Heart right ventricle (tissue), 16 donors: ENCODE measurements at regions of chr9 and their contacts with region 1.

Region 1: GRCh38 chr9:109574068-109574882 is 76.2 kb upstream of the PTPN3 start:
- DNase-seq: peak in 1 of 2 donors; percentile 48
- ATAC-seq: peak; percentile 46 to 81 (median 72)
- H3K4me3 ChIP-seq: no peak overlapping the region
- H3K27ac ChIP-seq: no peak overlapping the region
- H3K4me1 ChIP-seq: peaks cover 0 to 5% (median 0%) of the 10 kb centered on the region in 9 donors
- H3K27me3 ChIP-seq: no peaks in the 10 kb centered on the region
- CTCF ChIP-seq: peak; percentile 39 to 82 (median 73)

Region 2: GRCh38 chr9:109507421-109507838 is 66.8 kb before region 1 on chr9:
- intact Hi-C with region 1: no loop called
- DNase-seq: no peak
- ATAC-seq: peak in 7 of 8 donors; percentile 9 to 63 (median 42)
- H3K4me3 ChIP-seq: no peak overlapping the region
- H3K27ac ChIP-seq: no peak overlapping the region
- H3K4me1 ChIP-seq: no peaks in the 10 kb centered on the region
- H3K27me3 ChIP-seq: peaks cover 0 to 7% (median 0%) of the 10 kb centered on the region in 7 donors
- CTCF ChIP-seq: no peak

Region 3: GRCh38 chr9:109632817-109633216 is 58.5 kb after region 1 on chr9:
- intact Hi-C with region 1: no loop called
- DNase-seq: no peak
- ATAC-seq: no peak
- H3K4me3 ChIP-seq: no peak overlapping the region
- H3K27ac ChIP-seq: no peak overlapping the region
- H3K4me1 ChIP-seq: no peaks in the 10 kb centered on the region
- H3K27me3 ChIP-seq: peaks cover 0 to 9% (median 2%) of the 10 kb centered on the region in 7 donors
- CTCF ChIP-seq: no peak

Region 4: GRCh38 chr9:109779711-109780452 is 205.6 kb after region 1 on chr9 and contains the start of gene PALM2AKAP2:
- intact Hi-C with region 1: loop called in 1 of 10 experiments (anchors 1 kb)
- DNase-seq: peak; percentile 70 to 81
- ATAC-seq: peak; percentile 85 to 96 (median 90)
- H3K4me3 ChIP-seq: peak within 1 kb of the TSS; percentile 63 to 86 (median 76)
- H3K27ac ChIP-seq: peak within 1 kb of the TSS; percentile 63 to 93 (median 86)
- H3K4me1 ChIP-seq: peaks cover 0 to 26% (median 4%) of the 10 kb centered on the region in 9 donors
- H3K27me3 ChIP-seq: peaks cover 0 to 32% (median 0%) of the 10 kb centered on the region in 7 donors
- CTCF ChIP-seq: peak in 6 of 9 donors; percentile 26 to 60 (median 44)
- total RNA-seq, gene PALM2AKAP2: 66.3 to 111 (median 98.8) TPM

Region 5: DNA sequence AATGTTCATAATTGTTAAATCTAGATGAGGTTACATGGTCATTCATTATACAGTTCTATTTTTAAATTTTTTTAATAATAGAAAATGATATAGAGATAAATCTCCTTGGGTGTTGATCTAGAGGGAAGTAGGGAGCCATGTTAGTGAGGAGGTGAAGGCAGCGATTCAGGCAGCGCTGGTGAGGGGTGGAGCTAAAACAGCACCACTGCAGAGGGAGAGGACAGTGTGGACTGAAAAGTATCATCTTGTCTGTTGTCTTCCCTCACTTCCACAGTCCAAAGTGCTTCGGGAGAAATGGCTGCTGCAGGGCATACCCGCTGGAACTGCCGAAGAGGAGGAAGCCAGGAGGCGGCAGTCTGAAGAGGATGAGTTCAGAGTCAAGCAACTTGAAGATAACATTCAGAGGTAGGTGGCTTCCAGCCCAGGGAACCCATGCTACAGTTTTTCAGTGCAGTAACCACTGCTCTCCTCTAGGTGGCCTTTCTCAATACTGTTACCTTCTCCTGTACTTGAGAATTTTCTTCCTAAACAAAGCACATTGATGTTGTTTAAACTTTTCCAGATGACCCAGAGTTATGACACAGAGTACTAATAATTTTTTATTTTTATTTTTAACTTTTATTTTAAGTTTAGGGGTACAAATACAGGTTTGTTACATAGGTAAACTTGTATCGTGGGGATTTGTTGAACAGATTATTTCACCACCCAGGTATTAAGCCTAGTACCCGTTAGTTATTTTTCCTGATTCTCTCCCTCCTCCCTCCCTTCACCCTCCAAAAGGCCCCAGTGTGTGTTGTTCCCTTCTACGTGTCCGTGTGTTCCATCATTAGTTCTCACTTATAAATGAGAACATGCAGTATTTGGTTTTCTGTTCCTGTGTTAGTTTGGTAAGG is 306.2 kb after region 1 on chr9:
- intact Hi-C with region 1: loop called in 6 of 10 experiments (anchors 5 to 10 kb)
- DNase-seq: no peak
- ATAC-seq: no peak
- H3K4me3 ChIP-seq: no peak overlapping the region
- H3K27ac ChIP-seq: no peak overlapping the region
- H3K4me1 ChIP-seq: peaks cover 0 to 27% (median 5%) of the 10 kb centered on the region in 9 donors
- H3K27me3 ChIP-seq: no peaks in the 10 kb centered on the region
- CTCF ChIP-seq: peak; percentile 14 to 73 (median 56)

Region 6: DNA sequence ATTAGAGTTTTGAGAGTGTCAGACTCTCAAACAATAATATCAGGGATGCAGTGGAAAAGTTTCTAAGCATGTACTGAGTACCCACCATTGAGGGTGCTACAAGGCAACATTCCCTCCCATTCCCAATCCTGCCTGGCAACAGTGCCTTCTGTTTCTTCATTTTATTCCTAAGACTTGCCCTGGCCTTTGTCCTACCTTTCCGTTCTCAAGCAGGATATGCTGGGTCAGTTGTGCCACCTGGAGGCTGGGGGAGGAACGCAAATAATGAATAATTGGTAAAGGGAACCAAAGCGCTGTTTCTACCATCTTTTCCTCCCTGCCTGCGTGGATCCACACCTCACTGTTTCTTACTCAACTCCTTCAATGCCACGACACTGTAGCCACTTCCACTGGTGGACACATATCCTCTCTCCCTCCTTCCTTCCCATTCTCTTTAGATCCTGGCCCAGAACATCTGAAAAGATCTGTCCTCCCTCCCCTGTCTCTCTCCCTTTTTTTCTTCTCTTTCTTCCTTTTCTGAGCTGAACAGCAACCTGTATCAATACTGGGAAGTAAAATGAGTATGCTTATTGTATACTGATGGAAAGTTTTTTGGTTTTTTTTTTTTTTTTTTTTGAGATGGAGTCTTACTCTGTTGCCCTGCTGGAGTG is 484.2 kb after region 1 on chr9:
- intact Hi-C with region 1: loop called in 2 of 10 experiments (anchors 5 to 10 kb)
- DNase-seq: peak; percentile 29 to 56
- ATAC-seq: peak; percentile 41 to 73 (median 70)
- H3K4me3 ChIP-seq: no peak overlapping the region
- H3K27ac ChIP-seq: peak overlapping the region in 4 of 10 donors; percentile 29 to 69 (median 40)
- H3K4me1 ChIP-seq: peaks cover 4 to 87% (median 42%) of the 10 kb centered on the region in 9 donors
- H3K27me3 ChIP-seq: no peaks in the 10 kb centered on the region
- CTCF ChIP-seq: peak in 8 of 9 donors; percentile 28 to 67 (median 57)

Region 7: GRCh38 chr9:110217656-110218099 is 643.4 kb after region 1 on chr9:
- intact Hi-C with region 1: loop called in 8 of 10 experiments (anchors 5 to 10 kb)
- DNase-seq: no peak
- ATAC-seq: no peak
- H3K4me3 ChIP-seq: no peak overlapping the region
- H3K27ac ChIP-seq: no peak overlapping the region
- H3K4me1 ChIP-seq: peaks cover 0 to 12% (median 0%) of the 10 kb centered on the region in 9 donors
- H3K27me3 ChIP-seq: no peaks in the 10 kb centered on the region
- CTCF ChIP-seq: peak; percentile 56 to 88 (median 79)